ENCODE measurements at regions of chr16 and their contacts with region 1.

Region 1: GRCh38 chr16:30122604-30123160 is 338 bp downstream of the MAPK3 start:
- DNase-seq: peak; percentile 35
- ATAC-seq: peak; percentile 37
- H3K4me3 Mint-ChIP-seq: peak overlapping the region; percentile 87
- H3K27ac Mint-ChIP-seq: peak overlapping the region; percentile 89
- H3K4me1 Mint-ChIP-seq: peaks cover 17% of the 10 kb centered on the region
- H3K27me3 Mint-ChIP-seq: no peaks in the 10 kb centered on the region

Region 2: DNA sequence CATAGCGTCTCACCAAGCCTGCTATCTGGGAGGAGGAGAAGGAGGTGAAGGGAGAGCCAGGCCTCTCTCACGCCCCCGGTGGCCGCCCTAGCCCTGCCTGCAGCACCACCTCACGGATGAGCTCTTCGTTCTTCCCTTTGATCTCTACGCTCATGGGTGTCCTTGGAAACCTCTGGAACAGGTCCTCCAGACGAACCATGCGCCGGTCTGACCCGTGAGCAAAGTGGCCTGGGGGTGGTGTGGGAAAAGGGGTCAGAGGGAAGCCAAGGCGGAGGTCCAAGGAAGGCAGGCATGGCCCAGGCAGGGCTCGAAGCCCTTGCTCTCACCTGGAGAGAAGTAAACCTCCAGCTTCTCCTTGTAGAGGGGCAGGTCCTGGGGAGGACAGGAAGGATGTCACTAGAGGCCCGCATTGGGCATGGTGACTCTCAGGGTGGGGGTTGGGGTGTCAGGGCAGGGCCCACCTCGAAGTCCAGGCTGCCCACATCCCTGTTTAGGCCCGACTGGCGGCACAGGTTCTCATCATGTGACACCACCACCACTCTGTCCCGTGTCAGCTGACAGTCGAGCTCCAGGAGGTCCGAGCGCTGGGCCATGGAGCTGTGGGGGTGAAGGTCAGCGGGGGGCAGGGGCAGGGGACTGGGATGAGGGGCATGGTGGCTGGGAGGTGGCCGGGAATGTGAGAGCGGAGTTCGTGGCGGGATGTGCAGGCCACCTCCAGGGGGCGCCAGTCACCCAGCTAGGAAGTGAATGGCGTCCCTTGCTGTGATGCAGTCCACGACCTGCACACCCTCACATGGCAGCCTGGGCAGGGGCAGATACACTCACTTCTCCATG is 10.3 kb before region 1 on chr16:
- CTCF ChIA-PET with region 1: interaction called, 11 read pairs
- POLR2A ChIA-PET with region 1: no interaction called
- intact Hi-C with region 1: no loop called
- DNase-seq: peak; percentile 85
- ATAC-seq: peak; percentile 80
- H3K4me3 Mint-ChIP-seq: no peak overlapping the region
- H3K27ac Mint-ChIP-seq: no peak overlapping the region
- H3K4me1 Mint-ChIP-seq: peaks cover 6% of the 10 kb centered on the region
- H3K27me3 Mint-ChIP-seq: no peaks in the 10 kb centered on the region

Region 3: DNA sequence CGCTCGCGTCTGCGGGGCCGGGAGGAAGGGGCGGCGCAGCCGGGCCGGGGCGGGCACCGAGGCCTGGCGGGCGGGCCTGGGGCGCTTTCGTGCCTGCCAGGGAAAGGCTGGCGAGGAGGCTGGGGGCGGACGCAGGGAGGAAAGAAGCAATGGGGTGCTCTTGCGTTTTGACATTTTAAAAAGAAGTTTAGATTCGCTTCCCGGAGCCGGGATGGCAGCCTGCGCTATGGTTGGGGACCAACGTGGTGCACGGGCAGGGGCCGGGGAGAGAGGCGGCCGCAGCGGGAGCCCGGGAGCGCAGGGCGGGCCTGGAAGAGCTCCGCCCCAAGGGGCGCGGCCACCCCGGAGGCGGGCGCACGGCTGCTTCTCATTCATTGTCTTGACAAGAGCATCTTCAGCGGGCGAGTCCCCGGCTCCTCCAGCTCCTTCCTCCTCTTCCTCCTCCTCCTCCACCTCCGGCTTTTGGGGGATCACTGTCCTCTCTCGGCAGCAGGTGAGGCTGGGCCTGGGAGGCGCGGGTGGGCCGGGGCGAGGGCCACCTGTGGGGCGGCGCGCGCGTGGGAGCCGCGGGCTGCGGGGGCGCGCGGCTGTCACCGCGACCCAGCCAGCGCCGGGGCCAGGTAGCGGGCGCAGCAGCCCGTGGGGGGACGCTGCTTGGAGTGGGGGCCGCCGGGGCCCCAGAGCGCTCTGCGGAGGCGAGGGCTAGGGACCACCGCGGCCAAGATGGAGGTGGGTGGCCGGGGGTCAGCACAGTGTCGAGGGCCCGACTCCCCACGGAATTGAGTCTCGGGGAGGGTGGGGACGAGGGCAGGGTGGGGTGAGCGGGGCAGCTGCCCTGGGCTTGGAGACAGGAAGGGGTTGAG is 60.8 kb after region 1 on chr16 and contains the start of gene CORO1A:
- CTCF ChIA-PET with region 1: no interaction called
- POLR2A ChIA-PET with region 1: no interaction called
- intact Hi-C with region 1: loop called in 1 of 2 experiments (anchors 1 kb)
- DNase-seq: peak; percentile 95
- ATAC-seq: peak; percentile 53
- H3K4me3 Mint-ChIP-seq: peak within 1 kb of the TSS; percentile 91
- H3K27ac Mint-ChIP-seq: peak within 1 kb of the TSS; percentile 99
- H3K4me1 Mint-ChIP-seq: peaks cover 23% of the 10 kb centered on the region
- H3K27me3 Mint-ChIP-seq: no peaks in the 10 kb centered on the region
- total RNA-seq, gene CORO1A: 997 to 1,175 TPM